Sigmoid colon (tissue), 7 donors: ENCODE measurements at regions of chr18 and their contacts with region 1.

Region 1: GRCh38 chr18:79988451-79989194 is at the start of gene TXNL4A:
- DNase-seq: peak; percentile 90
- H3K4me3 ChIP-seq: peak within 1 kb of the TSS; percentile 79 to 96 (median 90)
- H3K27ac ChIP-seq: peak within 1 kb of the TSS; percentile 91 to 98 (median 96)
- H3K4me1 ChIP-seq: peaks cover 3 to 24% (median 22%) of the 10 kb centered on the region in 4 donors
- H3K27me3 ChIP-seq: no peaks in the 10 kb centered on the region
- CTCF ChIP-seq: no peak
- EP300 ChIP-seq: peak in 1 of 4 donors; percentile 25
- POLR2A ChIP-seq: peak; percentile 79 to 92
- total RNA-seq, gene TXNL4A: 16.9 to 32.9 (median 27.1) TPM

Region 2: GRCh38 chr18:79951578-79952455 is 36.8 kb before region 1 on chr18 and contains the start of gene SLC66A2:
- intact Hi-C with region 1: loop called (anchors 5 kb)
- DNase-seq: peak; percentile 94
- H3K4me3 ChIP-seq: peak within 1 kb of the TSS; percentile 90 to 100 (median 98)
- H3K27ac ChIP-seq: peak within 1 kb of the TSS; percentile 82 to 88 (median 86)
- H3K4me1 ChIP-seq: peaks cover 0 to 47% (median 33%) of the 10 kb centered on the region in 4 donors
- H3K27me3 ChIP-seq: no peaks in the 10 kb centered on the region
- CTCF ChIP-seq: no peak
- EP300 ChIP-seq: no peak
- POLR2A ChIP-seq: peak in 1 of 2 donors; percentile 33
- total RNA-seq, gene SLC66A2: 27.3 to 33.2 (median 32.0) TPM

Region 3: GRCh38 chr18:80009661-80010550 is 21.3 kb after region 1 on chr18:
- intact Hi-C with region 1: loop called (anchors 1 kb)
- DNase-seq: peak; percentile 97
- H3K4me3 ChIP-seq: peak overlapping the region in 1 of 4 donors; percentile 7
- H3K27ac ChIP-seq: peak overlapping the region; percentile 79 to 89 (median 82)
- H3K4me1 ChIP-seq: peaks cover 0 to 20% (median 16%) of the 10 kb centered on the region in 4 donors
- H3K27me3 ChIP-seq: no peaks in the 10 kb centered on the region
- CTCF ChIP-seq: no peak
- EP300 ChIP-seq: peak; percentile 32 to 89 (median 51)
- POLR2A ChIP-seq: no peak

Region 4: DNA sequence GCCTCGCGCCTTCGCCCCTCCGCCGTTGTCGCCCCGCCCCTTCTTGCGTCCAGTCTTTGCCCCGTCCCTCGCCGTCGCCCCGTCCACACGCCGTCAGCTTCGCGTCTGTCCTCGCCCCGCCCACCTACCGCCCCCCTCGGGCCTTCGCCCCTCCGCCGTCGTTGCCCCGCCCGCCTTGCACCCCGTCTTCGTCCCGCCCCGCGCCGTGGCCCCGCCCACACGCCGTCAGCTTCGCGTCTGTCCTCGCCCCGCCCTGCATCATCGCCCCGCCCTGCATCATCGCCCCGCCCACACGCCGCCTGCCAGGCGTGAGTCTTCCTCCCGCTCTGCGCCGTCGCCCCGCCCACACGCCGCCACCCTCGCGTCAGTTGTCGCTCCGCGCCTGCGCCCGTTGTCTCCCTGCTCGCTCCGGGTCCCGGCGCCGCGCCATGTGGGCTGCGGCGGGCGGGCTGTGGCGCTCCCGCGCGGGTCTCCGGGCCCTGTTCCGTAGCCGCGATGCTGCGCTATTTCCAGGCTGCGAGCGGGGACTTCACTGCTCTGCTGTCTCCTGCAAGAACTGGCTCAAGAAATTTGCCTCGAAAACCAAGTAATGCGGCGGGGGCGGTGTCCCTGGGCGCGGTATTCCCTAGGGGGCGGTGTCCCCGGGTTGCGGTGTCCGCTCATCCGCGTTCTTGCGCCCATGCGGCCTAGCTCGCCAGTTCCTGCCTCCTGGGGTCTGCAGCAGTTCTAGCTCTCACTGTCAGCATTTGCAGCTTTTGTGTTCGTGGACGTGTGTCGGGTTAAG is 45.6 kb after region 1 on chr18 and contains the start of gene RBFA:
- intact Hi-C with region 1: loop called (anchors 1 kb)
- DNase-seq: peak; percentile 100
- H3K4me3 ChIP-seq: peak within 1 kb of the TSS; percentile 44 to 93 (median 78)
- H3K27ac ChIP-seq: peak within 1 kb of the TSS; percentile 83 to 91 (median 84)
- H3K4me1 ChIP-seq: peaks cover 0 to 21% (median 13%) of the 10 kb centered on the region in 4 donors
- H3K27me3 ChIP-seq: no peaks in the 10 kb centered on the region
- CTCF ChIP-seq: peak in 3 of 4 experiments; percentile 27 to 46 (median 42)
- EP300 ChIP-seq: no peak
- POLR2A ChIP-seq: peak in 1 of 2 donors; percentile 36
- total RNA-seq, gene RBFA: 20.2 to 39.5 (median 28.4) TPM

Region 5: GRCh38 chr18:80108728-80109675 is 120.4 kb after region 1 on chr18 and contains the start of gene ADNP2:
- intact Hi-C with region 1: loop called (anchors 5 kb)
- DNase-seq: peak; percentile 92
- H3K4me3 ChIP-seq: peak within 1 kb of the TSS; percentile 39 to 90 (median 75)
- H3K27ac ChIP-seq: peak within 1 kb of the TSS; percentile 83 to 94 (median 92)
- H3K4me1 ChIP-seq: peaks cover 0 to 24% (median 13%) of the 10 kb centered on the region in 4 donors
- H3K27me3 ChIP-seq: no peaks in the 10 kb centered on the region
- CTCF ChIP-seq: no peak
- EP300 ChIP-seq: no peak
- POLR2A ChIP-seq: no peak
- total RNA-seq, gene ADNP2: 13.0 to 18.0 (median 13.3) TPM